ENCODE measurements at regions of chr22 and their contacts with region 1.

Region 1: DNA sequence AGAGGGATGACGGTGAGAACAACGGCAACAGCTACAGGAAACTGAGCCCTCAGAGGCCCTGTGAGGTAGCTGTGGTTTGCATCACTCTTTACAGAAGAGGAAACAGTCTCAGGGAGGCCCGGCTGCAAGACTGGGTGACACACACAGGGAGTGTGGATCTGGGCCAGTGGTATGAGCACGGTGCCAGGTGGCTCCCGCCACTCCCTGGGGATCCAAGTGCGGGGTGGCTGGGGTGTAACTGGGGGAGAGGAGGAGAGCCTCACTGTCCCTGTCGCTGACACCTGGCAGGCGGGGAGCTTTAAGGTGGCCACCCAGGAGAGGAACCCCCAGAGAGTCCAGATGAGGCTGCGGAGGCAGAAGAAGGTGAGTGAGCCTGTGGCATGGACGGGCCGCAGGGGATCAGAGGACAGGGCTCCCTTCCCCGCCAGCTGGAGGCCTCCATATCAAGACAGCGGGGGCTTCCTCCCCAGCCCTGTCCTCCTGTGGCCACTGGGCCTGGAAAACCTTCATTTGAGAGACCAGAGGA is 5.6 kb downstream of the RGL4 start:
- DNase-seq: peak; percentile 60 to 93 (median 80)
- ATAC-seq: peak; percentile 97
- H3K4me3 ChIP-seq: peak overlapping the region; percentile 53 to 67
- H3K4me3 Mint-ChIP-seq: peak overlapping the region; percentile 98
- H3K27ac ChIP-seq: peak overlapping the region; percentile 92 to 96
- H3K27ac Mint-ChIP-seq: peak overlapping the region; percentile 100
- H3K4me1 ChIP-seq: peaks cover 42% of the 10 kb centered on the region
- H3K4me1 Mint-ChIP-seq: peaks cover 52% of the 10 kb centered on the region
- H3K27me3 ChIP-seq: no peaks in the 10 kb centered on the region
- H3K27me3 Mint-ChIP-seq: no peaks in the 10 kb centered on the region
- CTCF ChIP-seq: no peak

Region 2: DNA sequence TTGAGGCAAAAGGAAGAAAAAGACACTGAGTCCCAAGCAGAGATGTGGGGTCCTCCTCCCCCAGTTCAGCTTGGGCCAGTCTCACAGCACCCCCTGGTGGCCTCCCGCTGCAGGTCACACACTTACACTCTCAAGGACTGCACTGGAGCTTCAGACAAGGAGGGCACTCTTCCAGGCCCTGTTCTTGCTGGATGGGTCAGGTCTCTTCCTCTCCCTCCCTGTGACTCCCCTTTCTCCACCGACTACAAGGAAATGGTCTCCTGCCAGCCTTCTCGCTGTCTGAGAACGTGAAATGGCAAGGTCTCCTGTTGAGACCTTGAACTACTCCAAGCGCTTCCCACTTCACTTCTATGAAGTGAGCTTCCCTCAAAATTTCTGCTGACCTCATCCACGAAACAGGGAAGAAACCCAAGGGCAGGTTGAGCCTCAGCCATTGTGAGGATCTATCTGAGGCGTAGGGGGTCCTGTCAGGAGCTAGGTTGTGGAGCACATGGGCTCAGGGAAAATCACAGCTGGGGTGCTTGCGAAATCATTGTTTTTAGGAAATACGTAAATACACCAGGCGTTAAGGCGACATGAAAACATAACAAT is 105.1 kb before region 1 on chr22:
- CTCF ChIA-PET with region 1: no interaction called
- POLR2A ChIA-PET with region 1: no interaction called
- intact Hi-C with region 1: no loop called
- DNase-seq: peak; percentile 39 to 70 (median 62)
- ATAC-seq: peak; percentile 61
- H3K4me3 ChIP-seq: no peak overlapping the region
- H3K4me3 Mint-ChIP-seq: no peak overlapping the region
- H3K27ac ChIP-seq: no peak overlapping the region
- H3K27ac Mint-ChIP-seq: no peak overlapping the region
- H3K4me1 ChIP-seq: no peaks in the 10 kb centered on the region
- H3K4me1 Mint-ChIP-seq: no peaks in the 10 kb centered on the region
- H3K27me3 ChIP-seq: no peaks in the 10 kb centered on the region
- H3K27me3 Mint-ChIP-seq: peaks cover 7% of the 10 kb centered on the region
- CTCF ChIP-seq: peak; percentile 64

Region 3: GRCh38 chr22:23716811-23717801 is 20.7 kb after region 1 on chr22:
- CTCF ChIA-PET with region 1: interaction called, 3 read pairs
- POLR2A ChIA-PET with region 1: interaction called, 36 read pairs
- intact Hi-C with region 1: loop called (anchors 1 kb)
- DNase-seq: peak; percentile 66 to 91 (median 83)
- ATAC-seq: peak; percentile 96
- H3K4me3 ChIP-seq: peak overlapping the region; percentile 94 to 99
- H3K4me3 Mint-ChIP-seq: peak overlapping the region; percentile 82
- H3K27ac ChIP-seq: peak overlapping the region; percentile 75 to 90
- H3K27ac Mint-ChIP-seq: peak overlapping the region; percentile 88
- H3K4me1 ChIP-seq: peaks cover 15% of the 10 kb centered on the region
- H3K4me1 Mint-ChIP-seq: peaks cover 24% of the 10 kb centered on the region
- H3K27me3 ChIP-seq: no peaks in the 10 kb centered on the region
- H3K27me3 Mint-ChIP-seq: no peaks in the 10 kb centered on the region
- CTCF ChIP-seq: no peak

Region 4: DNA sequence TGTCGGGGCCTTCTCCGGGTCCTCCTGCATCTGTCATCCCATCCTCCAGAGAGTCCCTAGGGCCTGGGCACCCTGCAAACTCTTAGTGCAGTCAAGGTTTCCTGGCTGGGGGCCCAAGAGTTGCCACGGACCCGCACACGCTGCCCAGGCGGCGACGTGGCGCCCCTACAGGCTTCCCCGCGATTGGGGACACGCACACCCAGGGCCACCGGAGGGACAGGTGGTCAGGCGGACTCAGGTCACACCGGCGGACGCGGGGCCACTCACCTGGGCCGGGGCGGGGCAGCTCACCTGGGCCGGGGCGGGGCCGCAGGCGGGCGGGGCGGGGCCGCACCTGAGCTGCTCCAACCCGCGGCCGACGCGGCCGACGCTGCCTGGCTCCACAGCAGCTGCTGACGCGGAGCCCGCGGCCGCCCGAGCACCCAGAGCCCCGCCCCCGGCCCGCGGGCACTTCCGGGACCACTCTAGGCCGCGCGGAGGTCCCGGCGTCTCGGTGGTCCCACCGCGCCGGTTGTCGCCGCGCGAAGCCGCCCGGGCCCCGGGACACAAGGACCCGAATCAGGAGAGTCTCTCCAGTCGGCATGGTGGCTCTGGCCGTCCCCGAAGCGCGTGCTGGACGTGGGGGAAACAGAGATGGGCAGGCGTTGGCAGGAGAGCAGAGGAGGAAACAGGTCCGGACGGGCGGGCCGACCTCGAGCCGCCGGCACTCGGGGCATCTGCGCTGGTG is 54.5 kb after region 1 on chr22 and contains the start of gene ZNF70:
- CTCF ChIA-PET with region 1: interaction called, 4 read pairs
- POLR2A ChIA-PET with region 1: interaction called, 16 read pairs
- intact Hi-C with region 1: loop called in 1 of 2 experiments (anchors 5 kb)
- DNase-seq: peak; percentile 73 to 95 (median 88)
- ATAC-seq: peak; percentile 98
- H3K4me3 ChIP-seq: peak within 1 kb of the TSS; percentile 75 to 76
- H3K4me3 Mint-ChIP-seq: peak within 1 kb of the TSS; percentile 82
- H3K27ac ChIP-seq: peak within 1 kb of the TSS; percentile 62 to 71
- H3K27ac Mint-ChIP-seq: peak within 1 kb of the TSS; percentile 80
- H3K4me1 ChIP-seq: peaks cover 7% of the 10 kb centered on the region
- H3K4me1 Mint-ChIP-seq: peaks cover 17% of the 10 kb centered on the region
- H3K27me3 ChIP-seq: no peaks in the 10 kb centered on the region
- H3K27me3 Mint-ChIP-seq: no peaks in the 10 kb centered on the region
- CTCF ChIP-seq: peak; percentile 13
- total RNA-seq, gene ZNF70: 1.7 to 1.9 TPM

Region 5: DNA sequence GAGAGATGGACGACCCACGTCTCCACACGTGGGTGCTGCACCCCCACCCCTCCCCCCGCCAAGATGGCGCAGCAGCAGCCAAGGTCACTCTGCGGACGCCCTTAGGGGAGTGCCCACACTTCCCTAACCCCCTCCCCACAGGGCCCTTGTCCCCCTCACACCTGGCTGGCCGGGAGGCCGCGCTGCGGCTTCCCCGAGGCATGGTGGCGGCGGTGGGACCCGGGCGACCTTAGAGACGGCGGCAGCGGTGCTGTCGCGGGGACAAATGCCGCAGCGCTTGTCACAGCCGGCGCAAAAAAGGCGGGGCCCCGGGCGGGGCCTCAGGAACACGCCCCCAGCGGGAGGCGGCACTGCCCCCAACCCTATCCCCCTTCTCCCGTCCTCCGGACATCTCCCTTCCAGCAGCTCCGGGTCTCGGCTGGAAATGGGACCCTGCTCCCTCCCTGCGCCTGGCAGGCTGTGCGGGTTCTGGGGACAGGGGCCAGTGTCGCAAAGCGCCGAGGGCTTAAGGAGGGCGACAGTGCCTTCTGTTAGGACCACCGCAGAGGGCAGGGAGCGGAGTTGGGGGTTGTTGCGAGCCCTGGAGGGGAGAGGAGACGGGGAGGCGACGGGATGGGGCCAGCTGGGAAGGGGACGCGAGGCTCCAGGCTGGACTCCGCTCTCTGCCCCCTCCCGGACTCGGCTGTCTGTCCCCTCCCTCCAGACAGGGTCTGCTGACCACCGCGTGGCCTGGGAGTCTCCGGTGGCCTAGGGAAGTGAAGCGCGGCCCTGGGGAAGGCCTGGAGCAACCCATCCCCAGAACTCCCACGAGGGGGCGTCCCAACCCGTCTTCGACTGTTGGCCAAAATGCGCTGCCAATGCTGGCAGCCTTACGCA is 71.5 kb after region 1 on chr22 and contains the start of gene CHCHD10:
- CTCF ChIA-PET with region 1: interaction called, 3 read pairs
- POLR2A ChIA-PET with region 1: interaction called, 7 read pairs
- intact Hi-C with region 1: loop called in 1 of 2 experiments (anchors 5 kb)
- DNase-seq: peak; percentile 54 to 84 (median 77)
- ATAC-seq: peak; percentile 70
- H3K4me3 ChIP-seq: peak within 1 kb of the TSS; percentile 85 to 97
- H3K4me3 Mint-ChIP-seq: peak within 1 kb of the TSS; percentile 82
- H3K27ac ChIP-seq: peak within 1 kb of the TSS; percentile 58 to 72
- H3K27ac Mint-ChIP-seq: peak within 1 kb of the TSS; percentile 52
- H3K4me1 ChIP-seq: peaks cover 63% of the 10 kb centered on the region
- H3K4me1 Mint-ChIP-seq: peaks cover 42% of the 10 kb centered on the region
- H3K27me3 ChIP-seq: no peaks in the 10 kb centered on the region
- H3K27me3 Mint-ChIP-seq: no peaks in the 10 kb centered on the region
- CTCF ChIP-seq: peak; percentile 66
- total RNA-seq, gene CHCHD10: 40.7 to 52.4 TPM

Region 6: GRCh38 chr22:23838681-23839468 is 142.5 kb after region 1 on chr22 and contains the start of gene DERL3:
- CTCF ChIA-PET with region 1: no interaction called
- POLR2A ChIA-PET with region 1: no interaction called
- intact Hi-C with region 1: loop called (anchors 1 to 5 kb)
- DNase-seq: peak; percentile 84 to 96 (median 92)
- ATAC-seq: peak; percentile 93
- H3K4me3 ChIP-seq: peak within 1 kb of the TSS; percentile 61 to 77
- H3K4me3 Mint-ChIP-seq: peak within 1 kb of the TSS; percentile 94
- H3K27ac ChIP-seq: peak within 1 kb of the TSS in 1 of 2 experiments; percentile 46
- H3K27ac Mint-ChIP-seq: peak within 1 kb of the TSS; percentile 82
- H3K4me1 ChIP-seq: peaks cover 7% of the 10 kb centered on the region
- H3K4me1 Mint-ChIP-seq: peaks cover 20% of the 10 kb centered on the region
- H3K27me3 ChIP-seq: no peaks in the 10 kb centered on the region
- H3K27me3 Mint-ChIP-seq: no peaks in the 10 kb centered on the region
- CTCF ChIP-seq: no peak
- total RNA-seq, gene DERL3: 0.81 to 0.92 TPM

Region 7: GRCh38 chr22:23893943-23894709 is 197.7 kb after region 1 on chr22 and contains the start of gene MIF:
- CTCF ChIA-PET with region 1: no interaction called
- POLR2A ChIA-PET with region 1: interaction called, 6 read pairs
- intact Hi-C with region 1: loop called in 1 of 2 experiments (anchors 1 kb)
- DNase-seq: peak; percentile 88 to 98 (median 94)
- ATAC-seq: peak; percentile 82
- H3K4me3 ChIP-seq: peak within 1 kb of the TSS; percentile 66 to 79
- H3K4me3 Mint-ChIP-seq: peak within 1 kb of the TSS; percentile 93
- H3K27ac ChIP-seq: peak within 1 kb of the TSS; percentile 75 to 92
- H3K27ac Mint-ChIP-seq: peak within 1 kb of the TSS; percentile 95
- H3K4me1 ChIP-seq: peaks cover 16% of the 10 kb centered on the region
- H3K4me1 Mint-ChIP-seq: peaks cover 23% of the 10 kb centered on the region
- H3K27me3 ChIP-seq: no peaks in the 10 kb centered on the region
- H3K27me3 Mint-ChIP-seq: no peaks in the 10 kb centered on the region
- CTCF ChIP-seq: peak; percentile 76
- total RNA-seq, gene MIF: 181 to 191 TPM

Measured in CD8-positive, alpha-beta T cell (primary cell).